CD4-positive, alpha-beta T cell (primary cell): ENCODE measurements at regions of chr1 and their contacts with region 1.

Region 1: GRCh38 chr1:244652699-244653466 is at the start of gene DESI2:
- DNase-seq: peak; percentile 95 to 100 (median 97)
- ATAC-seq: peak; percentile 92
- H3K4me3 ChIP-seq: peak within 1 kb of the TSS; percentile 80
- H3K4me3 Mint-ChIP-seq: peak within 1 kb of the TSS; percentile 88
- H3K27ac ChIP-seq: peak within 1 kb of the TSS; percentile 53 to 74
- H3K27ac Mint-ChIP-seq: peak within 1 kb of the TSS; percentile 83
- H3K4me1 ChIP-seq: peaks cover 23% of the 10 kb centered on the region
- H3K4me1 Mint-ChIP-seq: peaks cover 21% of the 10 kb centered on the region
- H3K27me3 ChIP-seq: no peaks in the 10 kb centered on the region
- H3K27me3 Mint-ChIP-seq: no peaks in the 10 kb centered on the region
- CTCF ChIP-seq: peak; percentile 46
- total RNA-seq, gene DESI2: 12.9 to 13.7 TPM

Region 2: DNA sequence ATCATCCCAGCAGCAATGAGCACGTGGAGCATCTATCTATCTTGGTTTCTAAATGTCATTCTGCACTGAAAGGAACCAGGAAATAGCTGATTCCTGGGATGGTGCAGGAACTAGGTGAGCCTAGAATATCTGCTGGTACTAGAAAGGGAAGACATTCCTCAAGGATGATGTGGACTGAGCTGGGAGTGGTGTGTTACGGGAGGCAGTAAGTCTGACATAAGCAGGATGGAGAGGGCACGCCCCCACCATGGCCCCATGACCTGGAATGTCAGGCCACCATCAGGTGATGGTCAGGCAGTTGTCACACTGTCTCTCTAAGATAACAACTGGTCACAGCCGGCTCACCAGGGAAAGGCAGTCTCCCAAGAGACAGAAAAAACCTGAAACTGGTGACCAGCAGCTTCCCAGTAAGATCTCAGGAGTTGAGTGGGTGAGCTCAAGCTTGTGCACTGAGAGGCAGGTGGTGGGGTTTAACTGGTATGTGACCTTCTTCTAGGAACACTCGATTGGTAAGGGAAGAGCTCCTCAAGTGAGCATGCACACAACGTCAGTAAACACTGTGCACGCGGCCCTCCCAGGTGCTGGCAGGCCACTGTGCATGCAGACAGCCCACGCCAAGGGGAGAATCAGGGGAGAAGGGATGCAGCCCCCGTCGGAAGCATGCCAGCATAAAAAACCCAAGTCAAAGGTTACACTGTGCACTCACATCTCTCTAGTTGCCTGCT is 349.8 kb before region 1 on chr1:
- CTCF ChIA-PET with region 1: no interaction called
- POLR2A ChIA-PET with region 1: no interaction called
- intact Hi-C with region 1: loop called in 1 of 2 experiments (anchors 10 kb)
- DNase-seq: no peak
- ATAC-seq: no peak
- H3K4me3 ChIP-seq: no peak overlapping the region
- H3K4me3 Mint-ChIP-seq: no peak overlapping the region
- H3K27ac ChIP-seq: no peak overlapping the region
- H3K27ac Mint-ChIP-seq: no peak overlapping the region
- H3K4me1 ChIP-seq: peaks cover 14% of the 10 kb centered on the region
- H3K4me1 Mint-ChIP-seq: peaks cover 8% of the 10 kb centered on the region
- H3K27me3 ChIP-seq: no peaks in the 10 kb centered on the region
- H3K27me3 Mint-ChIP-seq: no peaks in the 10 kb centered on the region
- CTCF ChIP-seq: no peak

Region 3: DNA sequence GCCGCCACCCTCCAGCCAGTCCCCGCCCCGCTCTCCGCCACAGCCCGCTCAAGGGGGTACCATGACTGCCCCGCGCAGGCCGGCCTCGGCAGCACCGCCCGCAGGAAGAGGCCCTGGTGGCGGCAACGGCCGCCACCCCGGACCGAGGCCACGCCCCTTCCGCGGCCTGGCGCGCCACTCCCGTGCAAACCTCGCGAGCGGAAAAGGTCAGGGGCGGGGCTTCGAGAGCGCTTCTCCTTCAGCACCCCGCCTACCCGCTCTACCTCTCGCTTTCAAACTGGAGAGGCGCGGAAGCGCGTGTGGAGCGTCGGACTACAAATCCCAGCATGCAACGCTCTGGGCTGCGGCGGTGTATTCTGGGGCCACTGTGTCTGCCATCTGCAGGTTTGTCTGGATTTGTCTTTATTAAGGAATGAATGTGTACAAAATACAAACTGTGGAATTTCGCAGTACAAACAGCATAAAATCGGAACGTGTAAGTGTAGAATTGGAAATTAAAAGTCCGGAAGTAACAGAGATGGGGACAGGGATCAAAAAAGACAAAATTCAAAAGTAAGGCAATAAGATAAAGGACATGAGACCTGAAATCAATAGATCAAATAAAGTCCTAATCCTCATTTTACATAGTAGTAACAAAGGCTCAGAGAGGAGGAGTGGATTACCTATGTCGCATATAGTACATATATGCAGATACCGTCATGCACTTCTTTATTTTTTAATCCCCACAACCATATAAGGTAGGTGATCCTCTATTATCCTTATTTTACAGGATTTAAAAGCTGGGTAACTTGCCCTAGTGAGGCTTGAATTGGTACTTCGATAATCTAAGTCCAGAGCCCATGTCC is 200.7 kb before region 1 on chr1:
- CTCF ChIA-PET with region 1: interaction called, 4 read pairs
- POLR2A ChIA-PET with region 1: interaction called, 6 read pairs
- intact Hi-C with region 1: loop called (anchors 2 kb)
- DNase-seq: peak; percentile 97 to 100 (median 99)
- ATAC-seq: peak; percentile 83
- H3K4me3 ChIP-seq: peak overlapping the region; percentile 86
- H3K4me3 Mint-ChIP-seq: peak overlapping the region; percentile 93
- H3K27ac ChIP-seq: peak overlapping the region; percentile 16 to 96
- H3K27ac Mint-ChIP-seq: peak overlapping the region; percentile 98
- H3K4me1 ChIP-seq: peaks cover 15% of the 10 kb centered on the region
- H3K4me1 Mint-ChIP-seq: peaks cover 42% of the 10 kb centered on the region
- H3K27me3 ChIP-seq: no peaks in the 10 kb centered on the region
- H3K27me3 Mint-ChIP-seq: no peaks in the 10 kb centered on the region
- CTCF ChIP-seq: peak; percentile 45

Region 4: DNA sequence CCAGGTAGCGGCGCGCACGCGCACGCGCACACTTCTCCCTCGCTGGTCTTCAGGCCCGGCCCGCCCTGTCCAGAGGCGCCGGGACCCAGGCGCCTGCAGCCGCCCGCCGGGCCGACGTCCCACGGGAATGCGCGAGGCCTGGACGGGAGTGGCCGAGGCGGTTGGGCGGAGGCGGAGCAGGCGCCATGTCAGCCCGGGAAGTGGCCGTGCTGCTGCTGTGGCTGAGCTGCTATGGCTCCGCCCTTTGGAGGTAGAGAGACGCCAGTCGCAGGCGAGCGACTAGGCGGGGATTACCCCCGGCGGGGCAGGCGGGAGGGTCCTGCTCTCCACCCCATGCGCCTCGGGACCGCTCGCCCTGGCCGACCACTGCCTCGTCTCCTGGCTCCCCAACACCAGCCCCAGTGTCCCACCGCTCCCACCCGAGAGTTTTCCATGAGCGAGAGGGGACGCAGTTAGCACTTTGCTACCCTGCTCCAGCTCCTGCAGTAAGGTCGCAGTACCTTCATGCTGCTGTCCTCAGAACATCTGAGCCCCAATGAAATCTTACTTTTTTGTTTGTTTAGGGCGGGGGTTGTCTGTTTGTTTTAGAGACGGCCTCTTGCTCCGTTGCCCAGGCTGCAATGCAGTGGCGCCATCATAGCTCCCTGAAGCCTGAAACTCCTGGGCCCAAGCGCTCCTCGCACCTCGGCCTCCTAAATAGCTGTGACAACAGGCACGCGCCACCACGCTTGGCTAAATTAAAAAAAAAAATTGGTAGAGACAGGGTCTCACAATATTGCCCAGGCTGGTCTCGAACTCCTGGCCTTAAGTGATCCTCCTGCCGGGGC is 191.4 kb before region 1 on chr1 and contains the start of gene CATSPERE:
- CTCF ChIA-PET with region 1: no interaction called
- POLR2A ChIA-PET with region 1: interaction called, 14 read pairs
- intact Hi-C with region 1: no loop called
- DNase-seq: peak; percentile 53 to 88 (median 70)
- ATAC-seq: peak; percentile 98
- H3K4me3 ChIP-seq: peak within 1 kb of the TSS; percentile 72
- H3K4me3 Mint-ChIP-seq: peak within 1 kb of the TSS; percentile 82
- H3K27ac ChIP-seq: peak within 1 kb of the TSS; percentile 77
- H3K27ac Mint-ChIP-seq: peak within 1 kb of the TSS; percentile 76
- H3K4me1 ChIP-seq: peaks cover 18% of the 10 kb centered on the region
- H3K4me1 Mint-ChIP-seq: peaks cover 12% of the 10 kb centered on the region
- H3K27me3 ChIP-seq: no peaks in the 10 kb centered on the region
- H3K27me3 Mint-ChIP-seq: no peaks in the 10 kb centered on the region
- CTCF ChIP-seq: no peak
- total RNA-seq, gene CATSPERE: 0.91 to 1.4 TPM

Region 5: DNA sequence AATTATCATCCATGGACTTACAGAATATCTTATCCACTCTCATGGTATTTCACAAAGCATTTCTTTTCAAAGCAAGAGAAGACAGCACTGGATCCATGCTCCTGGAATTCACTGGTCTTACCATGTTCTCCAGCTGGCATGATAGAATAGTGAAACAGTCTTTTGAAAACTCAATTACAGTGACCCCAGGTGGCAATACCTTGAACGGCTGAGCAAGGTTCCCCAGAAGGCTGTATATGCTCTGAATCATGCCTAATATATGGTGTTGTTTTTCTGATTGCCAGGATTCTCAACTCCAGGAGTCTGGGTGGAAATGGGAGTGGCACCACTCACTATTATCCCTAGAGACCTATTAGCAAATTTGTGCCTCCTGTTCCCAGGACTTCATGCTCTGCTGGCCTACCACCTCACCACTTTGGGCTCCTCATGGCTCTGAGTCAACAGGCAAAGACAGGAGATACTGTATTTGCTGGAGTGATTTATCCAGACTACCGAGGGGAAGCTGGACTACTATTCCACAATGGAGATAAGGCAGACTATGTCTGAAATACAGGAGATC is 104.2 kb before region 1 on chr1:
- CTCF ChIA-PET with region 1: no interaction called
- POLR2A ChIA-PET with region 1: no interaction called
- intact Hi-C with region 1: no loop called
- DNase-seq: no peak
- ATAC-seq: no peak
- H3K4me3 ChIP-seq: no peak overlapping the region
- H3K4me3 Mint-ChIP-seq: no peak overlapping the region
- H3K27ac ChIP-seq: no peak overlapping the region
- H3K27ac Mint-ChIP-seq: no peak overlapping the region
- H3K4me1 ChIP-seq: no peaks in the 10 kb centered on the region
- H3K4me1 Mint-ChIP-seq: no peaks in the 10 kb centered on the region
- H3K27me3 ChIP-seq: no peaks in the 10 kb centered on the region
- H3K27me3 Mint-ChIP-seq: no peaks in the 10 kb centered on the region
- CTCF ChIP-seq: no peak

Region 6: GRCh38 chr1:244603498-244603897 is 49.4 kb before region 1 on chr1:
- CTCF ChIA-PET with region 1: interaction called, 3 read pairs
- POLR2A ChIA-PET with region 1: no interaction called
- intact Hi-C with region 1: loop called in 1 of 2 experiments (anchors 2 kb)
- DNase-seq: peak in 3 of 14 experiments; percentile 49 to 63 (median 59)
- ATAC-seq: no peak
- H3K4me3 ChIP-seq: no peak overlapping the region
- H3K4me3 Mint-ChIP-seq: no peak overlapping the region
- H3K27ac ChIP-seq: no peak overlapping the region
- H3K27ac Mint-ChIP-seq: no peak overlapping the region
- H3K4me1 ChIP-seq: no peaks in the 10 kb centered on the region
- H3K4me1 Mint-ChIP-seq: no peaks in the 10 kb centered on the region
- H3K27me3 ChIP-seq: no peaks in the 10 kb centered on the region
- H3K27me3 Mint-ChIP-seq: no peaks in the 10 kb centered on the region
- CTCF ChIP-seq: peak; percentile 89

Region 7: DNA sequence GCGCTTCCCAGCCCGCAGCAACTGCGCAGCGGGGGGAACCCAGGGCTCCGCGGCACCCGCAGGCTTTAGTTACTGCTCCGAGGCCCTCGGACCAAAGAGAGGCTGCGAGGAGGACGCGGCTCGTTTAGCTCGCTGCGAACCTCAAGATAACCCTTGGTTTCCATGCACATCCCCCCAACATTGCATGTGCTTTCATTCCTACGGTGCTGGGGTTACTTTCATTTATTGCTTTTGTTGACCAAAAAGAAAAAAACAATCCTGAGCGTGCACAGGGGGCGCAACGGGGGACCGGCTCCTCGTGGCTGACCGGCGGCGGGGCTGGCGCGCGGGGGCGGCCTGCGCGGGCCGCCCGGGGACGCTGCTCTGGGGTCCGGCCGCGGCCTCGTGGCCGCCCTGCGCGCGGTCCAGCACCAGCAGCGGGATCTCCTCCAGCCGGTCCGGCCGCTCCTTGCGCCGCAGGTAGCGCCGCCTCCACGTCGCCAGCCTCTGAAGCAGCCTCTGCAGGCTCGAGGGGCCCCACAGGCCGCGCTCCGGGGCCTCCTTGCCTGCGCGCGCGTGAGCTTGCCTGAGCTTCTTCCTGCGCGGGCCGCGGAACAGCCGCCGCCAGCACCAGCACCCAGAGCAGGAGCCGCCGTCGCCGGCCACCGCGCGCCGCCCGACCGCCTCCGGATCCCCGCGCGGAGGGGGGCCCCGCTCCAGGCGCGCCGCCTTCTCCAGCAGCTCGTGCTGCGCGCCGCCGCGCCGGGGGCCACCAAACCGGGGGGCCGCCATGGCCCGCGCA is 77.5 kb after region 1 on chr1:
- CTCF ChIA-PET with region 1: no interaction called
- POLR2A ChIA-PET with region 1: interaction called, 10 read pairs
- intact Hi-C with region 1: no loop called
- DNase-seq: peak in 12 of 14 experiments; percentile 7 to 46 (median 14)
- ATAC-seq: peak; percentile 60
- H3K4me3 ChIP-seq: peak overlapping the region; percentile 62
- H3K4me3 Mint-ChIP-seq: peak overlapping the region; percentile 93
- H3K27ac ChIP-seq: no peak overlapping the region
- H3K27ac Mint-ChIP-seq: peak overlapping the region; percentile 73
- H3K4me1 ChIP-seq: peaks cover 13% of the 10 kb centered on the region
- H3K4me1 Mint-ChIP-seq: peaks cover 10% of the 10 kb centered on the region
- H3K27me3 ChIP-seq: peaks cover 0 to 7% of the 10 kb centered on the region in 2 experiments
- H3K27me3 Mint-ChIP-seq: peaks cover 22% of the 10 kb centered on the region
- CTCF ChIP-seq: no peak

Region 8: DNA sequence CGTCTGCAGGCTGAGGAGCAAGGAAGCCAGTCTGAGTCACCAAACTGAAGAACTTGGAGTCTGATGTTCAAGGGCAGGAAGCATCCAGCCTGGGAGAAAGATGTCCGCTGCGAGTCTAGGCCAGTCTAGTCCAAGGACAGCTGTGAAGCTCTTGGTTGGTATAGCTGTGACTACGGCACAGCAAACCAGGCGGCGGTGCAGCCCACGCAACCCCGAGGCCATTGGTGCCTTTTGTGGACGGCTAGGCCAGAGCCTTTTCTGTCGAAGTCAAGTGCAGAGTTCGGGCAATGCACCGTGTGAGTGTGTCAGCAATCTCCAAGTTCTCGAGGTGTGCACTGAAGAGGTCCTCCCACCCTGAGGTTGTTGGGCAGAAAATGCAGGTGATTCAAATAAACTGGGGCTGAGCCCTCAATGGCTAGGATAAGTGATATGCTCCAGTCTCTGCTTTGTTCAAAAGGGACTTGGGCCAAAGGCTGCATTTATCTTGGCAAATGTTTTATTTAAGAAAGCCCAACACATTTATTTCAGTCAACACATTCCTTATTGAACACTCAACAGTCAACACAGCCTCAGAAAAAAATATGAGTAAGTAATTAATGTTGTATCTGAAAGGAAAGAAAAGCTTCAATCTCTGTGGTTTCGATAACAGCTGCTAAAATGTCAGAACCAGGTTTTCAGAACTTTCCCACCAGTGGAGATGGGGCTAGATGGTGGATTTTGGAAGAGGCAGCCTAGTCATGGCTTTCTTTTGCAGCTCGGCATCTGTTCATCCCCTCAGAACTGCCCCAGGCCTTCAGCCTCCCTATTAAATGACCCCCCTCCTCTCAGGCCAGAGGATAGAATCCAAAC is 104.4 kb after region 1 on chr1:
- CTCF ChIA-PET with region 1: no interaction called
- POLR2A ChIA-PET with region 1: no interaction called
- intact Hi-C with region 1: no loop called
- DNase-seq: no peak
- ATAC-seq: no peak
- H3K4me3 ChIP-seq: no peak overlapping the region
- H3K4me3 Mint-ChIP-seq: no peak overlapping the region
- H3K27ac ChIP-seq: no peak overlapping the region
- H3K27ac Mint-ChIP-seq: no peak overlapping the region
- H3K4me1 ChIP-seq: no peaks in the 10 kb centered on the region
- H3K4me1 Mint-ChIP-seq: no peaks in the 10 kb centered on the region
- H3K27me3 ChIP-seq: no peaks in the 10 kb centered on the region
- H3K27me3 Mint-ChIP-seq: no peaks in the 10 kb centered on the region
- CTCF ChIP-seq: no peak

Region 9: GRCh38 chr1:244864253-244865027 is 211.6 kb after region 1 on chr1 and contains the start of gene HNRNPU:
- CTCF ChIA-PET with region 1: no interaction called
- POLR2A ChIA-PET with region 1: interaction called, 25 read pairs
- intact Hi-C with region 1: loop called (anchors 2 to 5 kb)
- DNase-seq: peak; percentile 90 to 99 (median 96)
- ATAC-seq: peak; percentile 62
- H3K4me3 ChIP-seq: peak within 1 kb of the TSS; percentile 91
- H3K4me3 Mint-ChIP-seq: peak within 1 kb of the TSS; percentile 96
- H3K27ac ChIP-seq: peak within 1 kb of the TSS; percentile 98 to 99
- H3K27ac Mint-ChIP-seq: peak within 1 kb of the TSS; percentile 98
- H3K4me1 ChIP-seq: peaks cover 24% of the 10 kb centered on the region
- H3K4me1 Mint-ChIP-seq: peaks cover 53% of the 10 kb centered on the region
- H3K27me3 ChIP-seq: no peaks in the 10 kb centered on the region
- H3K27me3 Mint-ChIP-seq: peaks cover 5% of the 10 kb centered on the region
- CTCF ChIP-seq: peak; percentile 30
- total RNA-seq, gene HNRNPU: 415 TPM

Region 10: DNA sequence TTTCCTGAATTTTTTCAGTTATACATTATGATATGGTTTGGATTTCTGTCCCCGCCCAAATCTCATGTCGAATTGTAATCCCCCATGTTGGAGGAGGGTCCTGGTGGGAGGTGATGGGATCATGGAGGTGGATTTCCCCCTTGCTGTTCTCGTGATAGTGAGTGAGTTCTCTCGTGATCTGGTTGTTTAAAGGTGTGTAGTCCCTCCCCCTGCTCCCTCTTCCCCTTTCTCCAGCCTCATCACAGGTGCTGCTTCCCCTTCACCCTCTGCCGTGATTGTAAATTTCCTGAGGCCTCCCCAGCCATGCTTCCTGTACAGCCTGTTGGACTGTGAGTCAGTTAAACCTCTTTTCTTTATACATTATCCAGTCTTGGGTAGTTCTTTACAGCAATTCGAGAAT is 304.6 kb after region 1 on chr1:
- CTCF ChIA-PET with region 1: no interaction called
- POLR2A ChIA-PET with region 1: no interaction called
- intact Hi-C with region 1: no loop called
- DNase-seq: no peak
- ATAC-seq: no peak
- H3K4me3 ChIP-seq: no peak overlapping the region
- H3K4me3 Mint-ChIP-seq: no peak overlapping the region
- H3K27ac ChIP-seq: no peak overlapping the region
- H3K27ac Mint-ChIP-seq: no peak overlapping the region
- H3K4me1 ChIP-seq: no peaks in the 10 kb centered on the region
- H3K4me1 Mint-ChIP-seq: no peaks in the 10 kb centered on the region
- H3K27me3 ChIP-seq: peaks cover 0 to 5% of the 10 kb centered on the region in 2 experiments
- H3K27me3 Mint-ChIP-seq: no peaks in the 10 kb centered on the region
- CTCF ChIP-seq: no peak